Posterior vena cava (tissue), 2 donors: ENCODE measurements at regions of chrX and their contacts with region 1.

Region 1: DNA sequence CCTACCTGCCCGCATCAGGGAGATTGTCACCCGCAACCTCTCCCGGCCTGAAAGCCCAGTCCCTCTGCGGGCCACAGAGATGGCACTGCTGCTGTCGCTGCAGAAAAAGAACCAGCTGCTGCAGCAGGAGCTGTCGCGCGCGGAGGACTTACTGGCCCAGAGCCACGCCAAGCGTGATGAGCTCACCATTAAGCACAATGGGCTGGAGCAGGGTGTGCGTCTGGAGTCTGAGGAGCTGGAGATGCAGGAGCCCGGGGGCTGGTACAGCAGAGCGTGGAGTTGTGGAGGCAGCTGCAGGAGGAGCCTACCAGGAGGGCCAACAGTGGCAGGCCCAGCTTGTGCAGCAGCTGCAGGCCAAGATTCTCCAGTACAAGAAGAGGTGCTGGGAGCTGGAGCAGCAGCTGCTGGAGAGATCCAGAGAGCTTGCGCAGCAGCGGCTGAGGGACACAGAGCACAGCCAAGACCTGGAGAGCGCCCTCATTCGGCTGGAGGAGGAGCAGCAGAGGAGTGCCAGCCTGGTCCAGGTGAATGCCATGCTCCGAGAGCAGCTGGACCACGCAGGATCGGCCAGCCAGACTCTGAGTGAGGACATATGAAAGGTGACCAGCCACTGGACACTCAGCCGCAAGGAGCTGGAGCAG is 11.3 kb downstream of the SMIM10L2A start:
- DNase-seq: peak; percentile 46

Region 2: GRCh38 chrX:135463937-135464336 is 30.9 kb after region 1 on chrX:
- intact Hi-C with region 1: loop called in 1 of 2 experiments (anchors 1 kb)
- DNase-seq: no peak